Heart right ventricle (tissue), 16 donors: ENCODE measurements at regions of chr1 and their contacts with region 1.

Region 1: DNA sequence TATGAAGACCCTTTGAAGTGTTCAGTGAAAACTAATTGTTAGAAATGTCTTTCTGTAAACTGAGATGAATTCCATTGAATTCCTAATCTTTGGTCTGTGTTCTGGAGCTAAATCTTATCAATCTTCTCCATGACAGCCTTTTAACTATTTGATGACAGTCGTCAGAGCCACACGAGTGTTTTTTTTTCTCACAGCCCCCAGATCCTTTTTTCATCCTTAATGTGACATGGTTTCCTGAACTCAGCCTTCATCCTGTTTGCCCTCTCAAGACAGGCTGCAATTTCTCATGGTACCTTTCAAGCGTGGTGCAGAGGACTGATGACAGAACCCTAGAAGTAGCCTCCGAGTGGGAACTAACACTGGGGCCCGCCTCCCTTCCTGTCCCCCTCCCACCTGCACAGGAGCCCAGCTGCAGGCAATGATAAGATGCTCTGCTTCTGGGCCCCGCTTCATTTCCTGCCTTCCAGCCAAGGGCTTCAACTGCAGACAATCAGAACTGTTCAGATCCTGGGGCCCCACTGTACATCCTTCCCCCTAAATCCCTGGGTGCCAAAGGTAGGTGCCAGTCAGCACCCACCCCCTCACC is 114.6 kb upstream of the VAV3 start:
- DNase-seq: no peak
- ATAC-seq: no peak
- H3K4me3 ChIP-seq: no peak overlapping the region
- H3K27ac ChIP-seq: peak overlapping the region in 1 of 10 donors; percentile 19
- H3K4me1 ChIP-seq: peaks cover 0 to 38% (median 0%) of the 10 kb centered on the region in 9 donors
- H3K27me3 ChIP-seq: peaks cover 0 to 4% (median 0%) of the 10 kb centered on the region in 7 donors
- CTCF ChIP-seq: no peak

Region 2: DNA sequence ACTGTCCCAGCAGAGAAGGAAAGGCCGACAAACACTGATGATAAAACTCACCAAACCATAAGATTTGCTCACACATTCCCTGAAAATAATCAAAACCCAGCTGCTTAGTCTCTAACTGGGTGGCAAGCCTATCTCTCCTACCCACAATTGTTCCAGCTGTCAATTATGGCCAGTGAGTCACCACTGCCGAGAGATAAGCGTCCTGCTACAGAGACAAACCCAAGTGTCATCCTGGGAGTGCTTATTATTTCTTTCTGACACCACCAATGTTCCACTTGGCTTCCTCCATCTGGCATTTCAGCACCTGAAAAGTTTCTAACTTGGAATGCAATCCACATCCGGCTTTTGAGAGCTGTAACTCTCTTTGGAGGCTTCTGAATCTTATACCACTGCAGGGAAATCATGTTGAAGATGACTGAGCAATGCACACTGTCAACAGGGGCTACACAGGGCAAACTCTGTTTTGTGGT is 63.0 kb before region 1 on chr1:
- intact Hi-C with region 1: loop called in 1 of 10 experiments (anchors 10 kb)
- DNase-seq: peak in 1 of 2 donors; percentile 12
- ATAC-seq: peak in 7 of 8 donors; percentile 23 to 95 (median 74)
- H3K4me3 ChIP-seq: no peak overlapping the region
- H3K27ac ChIP-seq: no peak overlapping the region
- H3K4me1 ChIP-seq: peaks cover 0 to 14% (median 10%) of the 10 kb centered on the region in 9 donors
- H3K27me3 ChIP-seq: no peaks in the 10 kb centered on the region
- CTCF ChIP-seq: no peak

Region 3: DNA sequence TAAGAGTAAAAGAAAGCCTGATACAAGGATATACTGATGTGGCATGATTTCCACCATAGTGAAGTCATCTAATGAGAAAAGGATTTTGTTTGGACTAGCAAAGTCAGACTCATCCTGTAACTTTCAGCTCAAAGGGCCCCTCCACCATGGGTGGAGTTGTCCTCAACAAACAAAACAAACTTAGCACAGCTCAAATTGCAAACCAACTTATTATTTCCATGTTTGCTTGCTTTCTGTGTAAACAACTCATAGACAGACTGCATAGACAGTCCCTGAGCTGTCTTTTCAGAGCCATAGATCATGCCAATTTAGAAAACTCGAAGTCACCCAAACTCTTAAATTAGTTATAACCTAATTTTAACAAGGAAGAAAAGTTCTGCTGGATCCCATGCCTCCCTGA is 45.1 kb before region 1 on chr1:
- intact Hi-C with region 1: loop called in 1 of 10 experiments (anchors 10 kb)
- DNase-seq: no peak
- ATAC-seq: no peak
- H3K4me3 ChIP-seq: no peak overlapping the region
- H3K27ac ChIP-seq: no peak overlapping the region
- H3K4me1 ChIP-seq: peaks cover 0 to 8% (median 0%) of the 10 kb centered on the region in 9 donors
- H3K27me3 ChIP-seq: no peaks in the 10 kb centered on the region
- CTCF ChIP-seq: no peak

Region 4: GRCh38 chr1:108067884-108068538 is 11.5 kb before region 1 on chr1:
- intact Hi-C with region 1: loop called in 1 of 10 experiments (anchors 2 kb)
- DNase-seq: no peak
- ATAC-seq: no peak
- H3K4me3 ChIP-seq: no peak overlapping the region
- H3K27ac ChIP-seq: no peak overlapping the region
- H3K4me1 ChIP-seq: peaks cover 0 to 33% (median 0%) of the 10 kb centered on the region in 9 donors
- H3K27me3 ChIP-seq: no peaks in the 10 kb centered on the region
- CTCF ChIP-seq: no peak